Lower leg skin (tissue), 4 donors: ENCODE measurements at regions of chr17 and their contacts with region 1.

Region 1: DNA sequence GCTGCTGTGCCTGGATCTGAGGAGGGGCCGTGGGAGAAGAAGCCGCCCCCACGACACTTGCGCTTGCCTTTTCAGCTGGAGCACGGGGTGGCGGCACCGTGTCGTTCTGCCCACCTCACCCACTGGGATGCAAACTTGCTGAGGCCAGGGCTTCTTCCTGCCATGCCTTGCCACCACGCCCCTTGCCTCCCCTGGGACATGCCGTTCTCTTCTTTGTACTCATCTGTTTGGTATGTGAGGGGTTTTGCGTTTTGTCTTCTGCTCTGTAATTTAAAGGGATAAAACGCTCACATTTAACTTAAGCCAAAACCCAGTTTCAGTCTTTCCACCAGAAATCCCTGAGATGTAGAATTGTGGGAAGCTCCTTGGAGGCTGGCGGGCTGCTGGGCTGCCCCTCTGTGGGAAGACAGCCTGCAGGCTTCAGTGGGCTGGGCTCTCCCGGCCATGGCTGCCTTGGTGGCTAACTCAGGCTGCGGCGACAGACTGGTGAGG is 180.2 kb downstream of the RPTOR start:
- DNase-seq: no peak
- H3K4me3 ChIP-seq: no peak overlapping the region
- CTCF ChIP-seq: no peak
- POLR2A ChIP-seq: no peak

Region 2: GRCh38 chr17:80187515-80187941 is 537.3 kb before region 1 on chr17:
- intact Hi-C with region 1: no loop called
- DNase-seq: peak; percentile 59 to 92
- H3K4me3 ChIP-seq: no peak overlapping the region
- CTCF ChIP-seq: no peak
- POLR2A ChIP-seq: no peak

Region 3: DNA sequence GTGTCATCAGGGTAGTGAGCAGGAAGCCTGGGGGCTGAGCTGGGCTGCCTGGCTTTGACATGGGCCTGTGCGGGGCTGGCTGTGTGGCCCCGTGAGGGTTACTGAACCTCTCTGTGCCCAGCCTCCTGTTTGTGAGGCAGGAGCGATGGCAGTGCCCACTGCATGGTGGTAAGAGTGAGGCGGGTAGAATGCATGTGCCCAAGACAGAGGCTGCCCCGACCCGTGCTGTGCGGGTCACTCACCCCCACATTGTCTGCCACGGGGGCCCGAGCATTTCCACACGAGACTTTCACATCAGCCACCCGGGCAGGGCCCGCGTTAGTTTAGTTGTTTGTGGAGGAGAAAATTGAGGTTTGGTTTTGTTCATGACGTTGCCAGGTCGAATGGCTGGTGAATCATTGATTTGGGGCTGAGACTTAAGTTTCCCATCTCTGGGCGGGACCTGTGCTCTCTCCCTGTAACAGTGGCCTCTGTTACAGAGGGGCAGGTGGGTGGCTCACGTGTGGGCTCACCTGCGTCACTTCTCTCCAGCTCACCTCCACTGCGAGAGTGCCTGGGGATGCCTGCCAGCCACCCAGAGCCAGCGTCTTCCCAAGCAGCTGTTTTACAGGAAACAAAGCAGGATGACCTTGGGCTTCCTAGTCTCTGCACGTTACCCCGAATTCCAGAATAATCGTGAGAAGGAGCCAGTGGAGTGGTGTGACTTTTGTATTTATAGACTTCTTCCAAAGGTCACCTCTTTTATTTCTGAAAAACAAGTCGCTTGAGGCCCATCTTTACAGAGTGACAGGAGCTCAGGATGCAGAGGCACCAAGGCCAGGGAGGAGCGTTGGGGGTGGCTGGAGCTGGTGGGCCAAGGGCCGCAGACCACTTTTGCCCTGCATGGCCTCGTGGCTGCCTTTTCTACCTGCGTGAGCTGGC is 29.6 kb before region 1 on chr17:
- intact Hi-C with region 1: no loop called
- DNase-seq: no peak
- H3K4me3 ChIP-seq: no peak overlapping the region
- CTCF ChIP-seq: no peak
- POLR2A ChIP-seq: no peak

Region 4: GRCh38 chr17:80770881-80771611 is 46.2 kb after region 1 on chr17:
- intact Hi-C with region 1: loop called (anchors 1 kb)
- DNase-seq: no peak
- H3K4me3 ChIP-seq: no peak overlapping the region
- CTCF ChIP-seq: no peak
- POLR2A ChIP-seq: no peak